Head of caudate nucleus (tissue), 42 donors: ENCODE measurements at regions of chr19 and their contacts with region 1.

Region 1: DNA sequence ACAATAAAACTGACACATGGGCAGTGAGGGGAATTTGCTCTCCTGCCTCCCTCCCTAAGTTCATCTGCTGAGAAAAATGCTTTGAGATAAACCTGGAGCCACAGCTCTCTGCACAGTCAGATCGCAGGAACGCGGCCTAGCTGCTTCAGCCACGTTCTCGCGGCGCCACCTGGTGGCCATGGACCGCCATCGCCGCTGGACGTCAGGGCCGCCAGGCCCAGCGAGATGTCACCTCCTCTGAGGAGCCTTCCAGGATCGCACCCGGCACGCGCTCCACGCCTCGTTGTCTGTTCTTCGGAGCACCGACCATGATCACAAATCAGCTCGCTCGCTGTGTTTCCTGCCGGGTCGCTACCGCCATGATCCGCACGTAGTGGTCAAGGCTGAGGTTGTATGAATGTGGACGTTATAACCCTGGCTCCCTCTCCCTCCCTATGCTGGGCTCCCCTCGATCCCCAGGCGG is 20.6 kb upstream of the USP29 start:
- DNase-seq: peak; percentile 57 to 92 (median 82)

Region 2: GRCh38 chr19:56725829-56726424 is 373.3 kb before region 1 on chr19:
- intact Hi-C with region 1: loop called (anchors 5 kb)
- DNase-seq: peak in 28 of 42 donors; percentile 26 to 86 (median 56)

Region 3: DNA sequence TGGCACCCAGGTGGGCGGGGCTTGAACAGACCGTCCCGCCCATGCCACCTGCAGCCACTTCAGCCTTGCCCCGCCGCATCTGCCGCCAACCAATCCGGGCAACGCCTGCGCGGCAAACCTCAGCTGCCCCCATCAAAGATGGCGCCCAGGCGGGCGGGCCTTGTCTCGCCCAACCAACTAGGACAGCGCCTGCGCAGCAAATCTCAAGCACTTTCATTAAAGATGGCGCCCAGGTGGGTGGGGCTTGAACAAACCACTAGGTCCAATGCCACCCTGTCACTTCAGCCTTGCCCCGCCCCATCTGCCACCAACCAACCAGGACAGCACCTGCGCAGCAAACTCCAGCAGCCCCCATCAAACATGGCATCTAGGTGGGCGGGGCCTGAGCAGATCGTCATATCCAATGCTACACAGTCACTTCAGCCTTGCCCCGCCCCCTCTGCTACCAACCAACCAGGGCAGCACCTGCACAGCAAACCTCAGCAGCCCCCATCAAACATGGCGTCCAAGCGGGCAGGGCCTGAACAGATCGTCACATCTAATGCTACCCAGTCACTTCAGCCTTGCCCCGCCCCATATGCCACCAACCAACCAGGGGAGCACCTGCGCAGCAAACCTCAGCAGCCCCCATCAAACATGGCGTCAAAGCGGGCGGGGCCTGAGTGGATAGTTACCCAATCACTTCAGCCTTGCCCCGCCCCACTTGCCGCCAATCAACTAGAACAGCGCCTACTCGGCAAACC is 260.1 kb before region 1 on chr19:
- intact Hi-C with region 1: no loop called
- DNase-seq: peak in 41 of 42 donors; percentile 90 to 100 (median 97)

Region 4: GRCh38 chr19:57165846-57166245 is 66.6 kb after region 1 on chr19:
- intact Hi-C with region 1: no loop called
- DNase-seq: no peak

Region 5: DNA sequence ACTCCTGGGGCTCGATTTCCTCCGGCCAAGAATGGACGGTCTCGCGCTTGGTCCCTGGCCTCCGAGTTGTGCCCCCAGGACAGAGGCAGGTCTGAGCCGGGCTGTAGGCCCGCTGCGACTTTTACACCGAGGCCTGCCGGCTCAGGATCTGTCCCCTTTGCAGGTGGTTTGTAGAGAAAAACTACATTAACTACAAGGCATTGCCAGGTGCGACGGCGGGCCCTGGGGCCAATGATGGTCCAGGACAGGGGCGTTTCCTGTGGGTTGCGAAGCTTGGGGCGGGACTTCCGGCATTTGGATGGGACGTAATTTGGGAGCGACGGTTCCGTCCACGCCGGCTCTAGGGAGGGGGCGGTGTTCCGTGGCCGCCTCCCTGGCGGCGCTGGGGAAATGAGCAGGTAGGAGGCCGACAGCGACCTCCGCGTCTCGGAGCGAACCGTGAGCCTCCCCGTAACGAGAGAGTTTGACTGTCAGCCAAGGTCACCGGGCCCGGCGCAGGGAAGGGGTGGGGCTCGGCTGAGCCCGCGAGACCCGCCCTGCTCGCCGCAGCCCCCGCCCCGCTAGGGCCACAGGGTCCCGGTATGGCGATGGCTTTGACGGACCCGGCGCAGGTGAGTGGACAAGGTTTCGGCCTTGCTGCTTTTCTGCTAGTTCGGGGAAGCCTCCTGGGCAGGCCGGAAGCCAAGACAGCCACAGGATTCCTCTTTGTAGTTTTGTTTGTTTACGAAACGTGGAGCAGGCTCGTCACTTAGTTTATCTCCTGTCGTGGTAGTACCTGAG is 141.3 kb after region 1 on chr19 and contains the start of gene ZNF805:
- intact Hi-C with region 1: no loop called
- DNase-seq: peak; percentile 94 to 99 (median 96)